ENCODE measurements at regions of chr9 and their contacts with region 1.

Region 1: DNA sequence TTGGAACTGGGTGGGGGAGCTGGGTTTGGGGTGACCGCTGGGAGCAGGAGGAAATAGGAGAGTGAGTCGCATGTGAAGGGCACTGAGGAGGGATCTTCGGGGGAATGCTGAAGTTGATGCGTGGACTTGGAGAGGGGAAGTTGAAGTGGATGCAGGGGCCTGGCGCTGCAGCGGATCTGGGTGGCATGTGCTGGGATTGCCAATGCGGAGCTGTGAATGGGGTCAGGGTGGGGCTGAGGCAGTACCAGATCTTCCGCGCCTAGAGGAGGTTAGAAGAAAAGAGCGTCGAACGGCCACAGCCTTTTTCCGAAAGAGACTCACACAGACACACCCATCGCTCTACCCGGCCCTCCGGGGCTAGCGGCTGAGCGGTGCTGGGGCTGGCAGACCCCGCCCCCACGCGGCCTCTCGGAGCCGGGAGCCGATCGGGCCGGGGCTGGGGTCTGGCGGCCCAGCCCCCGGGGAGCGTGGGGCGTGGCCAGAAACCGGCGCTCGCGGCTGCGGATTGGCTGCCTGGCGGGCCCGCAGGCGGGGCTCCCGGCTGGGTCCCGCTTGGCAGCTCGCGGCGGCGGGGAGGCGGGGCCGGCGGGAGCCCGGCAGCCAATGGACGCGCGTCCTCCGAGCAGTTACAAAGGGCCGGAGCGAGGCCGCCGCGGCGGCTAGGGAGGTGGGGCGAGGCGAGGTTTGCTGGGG is at the start of gene TGFBR1:
- DNase-seq: peak; percentile 94
- H3K4me3 Mint-ChIP-seq: peak within 1 kb of the TSS; percentile 80
- H3K27ac Mint-ChIP-seq: peak within 1 kb of the TSS; percentile 67
- H3K4me1 Mint-ChIP-seq: peaks cover 41% of the 10 kb centered on the region
- H3K27me3 Mint-ChIP-seq: no peaks in the 10 kb centered on the region
- total RNA-seq, gene TGFBR1: 25.4 to 26.3 TPM

Region 2: GRCh38 chr9:99092643-99093491 is 11.7 kb before region 1 on chr9:
- CTCF ChIA-PET with region 1: interaction called, 7 read pairs
- POLR2A ChIA-PET with region 1: interaction called, 11 read pairs
- intact Hi-C with region 1: loop called (anchors 1 kb)
- DNase-seq: peak; percentile 74
- H3K4me3 Mint-ChIP-seq: peak overlapping the region; percentile 27
- H3K27ac Mint-ChIP-seq: peak overlapping the region; percentile 90
- H3K4me1 Mint-ChIP-seq: peaks cover 29% of the 10 kb centered on the region
- H3K27me3 Mint-ChIP-seq: no peaks in the 10 kb centered on the region

Region 3: DNA sequence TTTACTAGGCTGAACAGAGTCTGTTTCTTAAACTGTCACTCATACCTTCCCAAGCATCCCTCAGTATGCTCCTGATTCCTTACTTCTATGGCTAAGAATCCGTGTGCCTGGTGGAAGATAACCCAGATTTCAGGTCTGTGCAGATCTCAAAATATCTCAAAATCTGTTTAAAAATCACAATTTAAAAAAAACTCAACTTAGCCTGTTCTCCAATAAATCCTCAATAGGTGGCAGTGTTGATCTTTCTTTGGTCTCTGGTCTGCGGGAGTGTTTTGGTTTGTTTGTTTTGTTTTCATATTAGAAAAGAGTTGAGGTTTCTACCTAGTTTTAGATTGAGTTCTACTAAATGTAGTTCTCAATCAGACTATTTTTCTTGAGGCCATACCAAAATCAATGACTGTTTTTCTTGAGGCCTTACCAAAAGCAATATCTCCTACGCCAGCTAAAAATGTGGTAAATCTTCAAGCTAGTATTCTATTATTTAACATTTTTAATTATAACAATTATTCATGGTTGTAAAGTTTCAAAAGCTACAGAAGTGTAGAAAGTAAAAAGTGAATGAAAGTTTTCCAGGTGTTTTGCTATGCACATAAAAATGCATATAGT is 58.3 kb after region 1 on chr9:
- CTCF ChIA-PET with region 1: no interaction called
- POLR2A ChIA-PET with region 1: no interaction called
- intact Hi-C with region 1: no loop called
- DNase-seq: no peak
- H3K4me3 Mint-ChIP-seq: no peak overlapping the region
- H3K27ac Mint-ChIP-seq: no peak overlapping the region
- H3K4me1 Mint-ChIP-seq: peaks cover 10% of the 10 kb centered on the region
- H3K27me3 Mint-ChIP-seq: peaks cover 4% of the 10 kb centered on the region